Endothelial cell of umbilical vein (primary cell): ENCODE measurements at regions of chr1 and their contacts with region 1.

Region 1: DNA sequence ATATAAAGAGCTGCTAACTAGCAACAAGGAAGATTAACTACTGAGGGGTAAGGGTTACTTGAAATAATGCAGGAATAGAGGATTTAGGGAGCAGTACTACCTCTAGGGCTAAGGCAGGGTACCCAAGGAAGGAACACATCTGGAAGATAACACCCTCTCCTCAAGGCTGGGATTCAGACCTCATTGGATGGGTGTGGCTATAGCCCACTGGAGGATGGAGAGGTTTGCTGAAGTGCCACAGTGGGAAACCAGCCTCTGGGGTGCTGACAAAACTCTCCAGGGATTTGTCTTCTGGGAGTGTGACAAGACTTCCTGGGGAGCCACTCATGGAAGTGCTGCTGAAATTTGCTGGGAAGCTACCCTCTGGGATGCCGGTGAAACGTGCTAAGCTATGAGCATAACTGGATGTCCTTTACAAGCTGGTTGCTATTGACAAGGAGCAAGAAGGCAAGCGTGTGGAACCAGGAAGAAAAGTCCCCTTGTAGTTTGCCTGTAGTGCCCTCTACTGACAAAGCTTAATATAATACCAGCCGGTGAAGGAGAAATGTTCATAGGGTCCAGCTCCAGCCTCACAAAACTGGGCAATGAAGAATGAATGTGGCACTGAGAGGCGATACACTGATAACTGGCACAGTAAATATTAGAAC is 122.8 kb upstream of the USP24 start:
- DNase-seq: peak; percentile 79
- H3K4me3 ChIP-seq: no peak overlapping the region
- H3K27ac ChIP-seq: no peak overlapping the region
- H3K4me1 ChIP-seq: peaks cover 16% of the 10 kb centered on the region
- H3K27me3 ChIP-seq: no peaks in the 10 kb centered on the region
- CTCF ChIP-seq: peak; percentile 52 to 63
- POLR2A ChIP-seq: no peak

Region 2: GRCh38 chr1:55140546-55140983 is 197.4 kb before region 1 on chr1:
- CTCF ChIA-PET with region 1: interaction called, 3 read pairs
- POLR2A ChIA-PET with region 1: no interaction called
- dilution Hi-C with region 1: no loop called
- intact Hi-C with region 1: loop called (anchors 1 kb)
- DNase-seq: peak; percentile 82
- H3K4me3 ChIP-seq: no peak overlapping the region
- H3K27ac ChIP-seq: no peak overlapping the region
- H3K4me1 ChIP-seq: peaks cover 7% of the 10 kb centered on the region
- H3K27me3 ChIP-seq: no peaks in the 10 kb centered on the region
- CTCF ChIP-seq: peak; percentile 67 to 76
- POLR2A ChIP-seq: no peak

Region 3: DNA sequence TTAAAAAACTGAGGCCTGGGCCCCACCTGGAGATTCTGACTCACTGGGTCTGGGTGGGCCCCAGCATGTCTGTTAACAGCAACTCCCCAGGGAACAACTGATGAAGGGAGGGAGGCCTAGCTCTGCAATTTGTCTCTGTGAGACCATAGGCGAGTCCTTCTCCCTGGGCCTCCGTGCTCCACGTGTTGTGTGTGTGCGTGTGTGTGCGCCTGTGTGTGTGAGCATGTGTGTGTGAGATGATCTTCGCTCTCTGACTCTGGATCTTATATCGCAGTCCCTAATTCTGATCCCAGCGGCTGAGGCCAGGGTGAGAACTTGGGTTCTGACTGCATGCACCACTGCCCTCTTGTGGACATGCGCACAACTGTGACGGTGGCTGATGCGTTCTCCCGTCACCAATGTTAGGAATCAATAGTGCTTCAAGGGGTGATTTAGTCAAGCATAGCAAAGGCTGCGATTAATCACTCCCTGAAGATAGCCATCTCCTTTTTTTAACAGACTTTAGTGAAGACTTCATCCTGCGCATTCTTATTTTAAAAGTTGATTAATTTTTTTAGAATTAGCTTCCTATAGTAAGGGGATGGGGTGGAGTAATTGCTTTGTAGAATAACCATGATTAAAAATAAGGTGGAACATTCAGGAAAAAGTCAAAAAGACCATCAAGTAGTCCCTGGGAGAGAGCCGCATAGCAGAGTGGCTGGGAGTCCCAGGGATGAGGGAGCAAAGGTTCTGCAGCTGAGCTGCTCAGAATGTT is 60.4 kb before region 1 on chr1:
- CTCF ChIA-PET with region 1: interaction called, 192 read pairs
- POLR2A ChIA-PET with region 1: no interaction called
- dilution Hi-C with region 1: no loop called
- intact Hi-C with region 1: loop called (anchors 2 kb)
- DNase-seq: peak; percentile 66
- H3K4me3 ChIP-seq: no peak overlapping the region
- H3K27ac ChIP-seq: no peak overlapping the region
- H3K4me1 ChIP-seq: peaks cover 15% of the 10 kb centered on the region
- H3K27me3 ChIP-seq: no peaks in the 10 kb centered on the region
- CTCF ChIP-seq: peak; percentile 82 to 83
- POLR2A ChIP-seq: no peak

Region 4: GRCh38 chr1:55301912-55302311 is 36.0 kb before region 1 on chr1:
- CTCF ChIA-PET with region 1: interaction called, 20 read pairs
- POLR2A ChIA-PET with region 1: no interaction called
- dilution Hi-C with region 1: no loop called
- intact Hi-C with region 1: no loop called
- DNase-seq: no peak
- H3K4me3 ChIP-seq: no peak overlapping the region
- H3K27ac ChIP-seq: no peak overlapping the region
- H3K4me1 ChIP-seq: no peaks in the 10 kb centered on the region
- H3K27me3 ChIP-seq: no peaks in the 10 kb centered on the region
- CTCF ChIP-seq: no peak
- POLR2A ChIP-seq: no peak

Region 5: GRCh38 chr1:55318116-55318817 is 19.7 kb before region 1 on chr1:
- CTCF ChIA-PET with region 1: interaction called, 36 read pairs
- POLR2A ChIA-PET with region 1: interaction called, 3 read pairs
- dilution Hi-C with region 1: no loop called
- intact Hi-C with region 1: loop called (anchors 1 kb)
- DNase-seq: peak; percentile 85
- H3K4me3 ChIP-seq: no peak overlapping the region
- H3K27ac ChIP-seq: peak overlapping the region; percentile 9
- H3K4me1 ChIP-seq: peaks cover 55% of the 10 kb centered on the region
- H3K27me3 ChIP-seq: no peaks in the 10 kb centered on the region
- CTCF ChIP-seq: no peak
- POLR2A ChIP-seq: no peak

Region 6: GRCh38 chr1:56584910-56585528 is 1247.1 kb after region 1 on chr1:
- CTCF ChIA-PET with region 1: interaction called, 52 read pairs
- POLR2A ChIA-PET with region 1: no interaction called
- dilution Hi-C with region 1: no loop called
- intact Hi-C with region 1: loop called (anchors 1 kb)
- DNase-seq: peak; percentile 67
- H3K4me3 ChIP-seq: no peak overlapping the region
- H3K27ac ChIP-seq: no peak overlapping the region
- H3K4me1 ChIP-seq: peaks cover 2% of the 10 kb centered on the region
- H3K27me3 ChIP-seq: no peaks in the 10 kb centered on the region
- CTCF ChIP-seq: peak; percentile 61 to 65
- POLR2A ChIP-seq: no peak